Right ventricle myocardium inferior (tissue), 1 donor: ENCODE measurements at regions of chr6 and their contacts with region 1.

Region 1: GRCh38 chr6:43516697-43517504 is at the starts of genes POLR1C and YIPF3:
- DNase-seq: peak; percentile 98
- ATAC-seq: peak; percentile 94
- total RNA-seq, gene POLR1C: 17.3 TPM
- total RNA-seq, gene YIPF3: 72.2 TPM

Region 2: DNA sequence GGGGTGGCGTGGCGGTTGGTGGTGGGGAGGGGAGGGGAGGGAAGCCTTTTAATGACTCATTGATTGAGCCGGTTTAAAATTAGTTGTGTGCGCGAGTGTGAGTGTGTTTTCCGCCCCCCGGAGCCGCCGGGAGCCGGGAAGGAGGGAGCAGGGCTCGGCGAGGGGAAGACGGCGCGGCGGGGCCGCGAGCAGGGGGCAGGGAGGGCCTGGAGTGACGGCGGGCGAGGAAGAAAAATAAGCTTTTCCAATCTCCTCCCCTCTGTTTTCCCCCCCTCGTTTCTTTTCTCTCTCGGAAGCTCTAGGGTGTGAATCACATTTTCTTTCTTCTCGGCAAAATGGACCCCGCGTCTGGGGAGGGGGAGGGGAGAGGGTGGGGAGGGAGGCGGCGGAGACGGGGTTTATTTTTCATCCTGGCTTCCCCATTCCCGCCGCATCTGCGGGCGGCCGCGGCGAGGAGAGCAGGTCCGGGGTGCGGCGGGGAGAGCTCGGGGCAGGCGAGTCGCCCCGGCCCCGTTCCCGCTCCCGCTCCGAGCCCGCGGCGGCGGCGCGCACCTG is 734.2 kb before region 1 on chr6:
- intact Hi-C with region 1: loop called (anchors 10 kb)
- DNase-seq: peak; percentile 88
- ATAC-seq: peak; percentile 83

Region 3: DNA sequence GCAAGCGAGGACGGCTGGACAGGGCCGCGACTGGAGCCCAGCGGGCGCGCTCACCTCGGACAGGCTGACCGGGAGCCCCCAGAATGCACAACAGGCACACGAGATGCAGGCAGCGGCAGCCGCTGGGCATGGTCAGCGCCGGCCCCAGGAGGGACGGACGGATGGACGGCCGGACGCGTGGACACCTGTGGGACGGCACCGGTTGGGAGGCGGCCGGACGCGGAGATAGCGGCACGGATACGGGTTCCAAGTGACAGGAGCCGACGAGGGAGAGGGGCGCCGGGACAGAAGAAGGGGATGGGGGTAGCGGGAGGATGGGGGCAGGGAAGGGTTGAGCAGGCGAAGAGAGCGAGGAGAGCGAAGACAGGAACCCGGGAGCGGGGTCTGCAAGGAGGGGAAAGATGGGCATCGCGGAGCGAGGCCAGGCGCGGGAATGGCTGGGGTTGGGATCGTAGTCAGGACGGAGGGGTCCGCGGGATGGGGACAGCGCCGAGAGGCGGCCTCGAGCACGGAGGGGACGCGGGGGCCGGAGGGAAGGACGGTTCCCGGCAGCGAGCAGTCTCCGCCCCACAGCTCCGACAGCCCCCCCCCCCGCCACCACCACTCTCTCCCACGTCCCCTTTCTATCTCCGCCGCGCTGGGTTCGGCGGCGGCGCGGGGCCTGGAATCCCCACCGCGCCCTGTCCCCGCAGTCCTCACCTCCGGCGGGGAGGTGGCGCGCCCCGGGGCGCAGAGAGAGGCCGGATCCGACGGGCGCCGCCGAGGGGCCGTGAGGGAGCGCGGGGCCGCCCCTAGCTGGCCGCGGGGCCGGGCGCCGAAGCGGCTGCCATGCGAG is 62.0 kb before region 1 on chr6:
- intact Hi-C with region 1: no loop called
- DNase-seq: peak; percentile 93
- ATAC-seq: peak; percentile 90

Region 4: DNA sequence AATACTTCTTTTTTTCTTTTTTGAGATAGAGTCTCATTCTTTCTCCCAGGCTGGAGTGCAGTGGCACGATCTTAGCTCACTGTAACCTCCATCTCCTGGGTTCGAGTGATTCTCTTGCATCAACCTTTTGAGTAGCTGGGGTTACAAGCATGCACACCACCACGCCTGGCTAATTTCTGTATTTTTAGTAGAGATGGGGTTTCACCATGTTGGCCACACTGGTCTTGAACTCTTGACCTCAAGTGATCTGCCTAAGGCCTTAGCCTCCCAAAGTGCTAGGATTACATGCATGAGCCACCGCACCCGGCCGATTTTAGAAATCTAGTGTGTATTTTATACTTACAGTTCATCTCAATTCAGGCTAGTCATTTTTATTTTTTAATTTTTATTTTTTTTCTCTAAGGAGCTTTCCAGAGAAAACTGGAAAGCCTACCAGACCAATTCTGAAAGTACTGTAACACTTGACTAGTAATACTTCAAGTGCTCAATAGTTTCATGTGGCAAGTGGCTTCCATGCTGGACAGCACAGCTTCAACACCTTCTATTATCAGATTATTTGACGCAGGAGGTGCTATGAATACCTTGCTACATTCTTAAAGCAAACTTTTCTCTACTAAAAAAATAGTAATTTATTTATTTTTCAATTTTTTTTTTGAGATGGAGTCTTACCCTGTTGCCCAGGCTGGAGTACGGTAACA is 25.0 kb after region 1 on chr6:
- intact Hi-C with region 1: no loop called
- DNase-seq: no peak
- ATAC-seq: no peak

Region 5: GRCh38 chr6:43575772-43576551 is 59.1 kb after region 1 on chr6 and contains the starts of genes POLH and XPO5:
- intact Hi-C with region 1: loop called (anchors 2 kb)
- DNase-seq: peak; percentile 95
- ATAC-seq: peak; percentile 100
- total RNA-seq, gene POLH: 5.9 TPM
- total RNA-seq, gene XPO5: 11.7 TPM